ENCODE measurements at regions of chr14 and their contacts with region 1.

Region 1: DNA sequence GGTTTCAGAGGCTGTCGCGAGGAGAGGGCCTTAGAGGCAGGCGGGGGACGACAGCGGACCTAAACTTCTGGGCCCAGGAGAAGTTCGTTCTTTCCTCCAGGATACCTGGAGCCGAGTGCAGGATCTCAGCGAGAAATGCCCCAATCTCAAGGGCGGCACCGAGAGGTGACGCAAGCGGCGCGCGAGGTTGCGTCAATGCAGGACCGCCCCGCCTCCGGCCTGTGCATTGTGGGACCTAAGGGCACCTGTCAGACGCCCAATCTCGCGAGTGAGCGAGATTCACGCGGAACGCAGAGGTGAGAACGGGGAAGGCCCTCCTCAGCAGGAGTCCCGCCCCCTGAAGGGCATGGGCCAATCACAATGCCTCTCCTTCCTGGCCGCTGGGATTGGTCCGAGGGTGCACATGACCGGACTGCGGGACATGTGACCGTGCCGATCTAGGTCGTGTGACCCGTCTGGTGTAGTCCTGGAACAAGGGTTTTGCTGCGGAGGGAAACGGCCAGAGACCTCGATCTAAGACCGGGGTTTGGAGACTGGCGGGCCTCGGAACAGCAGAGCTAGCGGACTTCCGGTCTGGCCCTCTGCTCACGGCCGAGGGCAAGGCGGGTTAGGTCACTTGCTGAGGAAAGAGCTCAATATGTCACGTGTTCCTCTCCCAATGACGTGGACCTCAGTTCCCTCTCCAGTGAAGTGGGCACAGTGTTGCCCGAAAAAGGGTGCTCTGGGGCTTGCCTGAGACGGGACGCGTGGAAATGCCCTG is 16.3 kb upstream of the DYNC1H1 start:
- DNase-seq: peak; percentile 100
- ATAC-seq: peak; percentile 96
- H3K4me3 ChIP-seq: peak overlapping the region; percentile 80 to 99 (median 91)
- H3K4me3 Mint-ChIP-seq: peak overlapping the region; percentile 97
- H3K27ac ChIP-seq: peak overlapping the region; percentile 97 to 99
- H3K27ac Mint-ChIP-seq: peak overlapping the region; percentile 99
- H3K4me1 ChIP-seq: peaks cover 10 to 18% of the 10 kb centered on the region in 2 donors
- H3K4me1 Mint-ChIP-seq: peaks cover 23% of the 10 kb centered on the region
- H3K27me3 ChIP-seq: peaks cover 0 to 13% (median 2%) of the 10 kb centered on the region in 4 experiments
- H3K27me3 Mint-ChIP-seq: peaks cover 25% of the 10 kb centered on the region
- CTCF ChIP-seq: no peak

Region 2: GRCh38 chr14:101761032-101761880 is 186.8 kb before region 1 on chr14 and contains the start of gene PPP2R5C:
- CTCF ChIA-PET with region 1: interaction called, 4 read pairs
- POLR2A ChIA-PET with region 1: interaction called, 21 read pairs
- intact Hi-C with region 1: loop called (anchors 1 kb)
- DNase-seq: peak; percentile 93
- ATAC-seq: peak; percentile 63
- H3K4me3 ChIP-seq: peak within 1 kb of the TSS; percentile 73 to 96 (median 87)
- H3K4me3 Mint-ChIP-seq: peak within 1 kb of the TSS; percentile 94
- H3K27ac ChIP-seq: peak within 1 kb of the TSS; percentile 66 to 78
- H3K27ac Mint-ChIP-seq: peak within 1 kb of the TSS; percentile 92
- H3K4me1 ChIP-seq: peaks cover 11 to 12% of the 10 kb centered on the region in 2 donors
- H3K4me1 Mint-ChIP-seq: peaks cover 14% of the 10 kb centered on the region
- H3K27me3 ChIP-seq: no peaks in the 10 kb centered on the region
- H3K27me3 Mint-ChIP-seq: no peaks in the 10 kb centered on the region
- CTCF ChIP-seq: no peak
- total RNA-seq, gene PPP2R5C: 330 and 337 TPM in 2 replicates

Region 3: DNA sequence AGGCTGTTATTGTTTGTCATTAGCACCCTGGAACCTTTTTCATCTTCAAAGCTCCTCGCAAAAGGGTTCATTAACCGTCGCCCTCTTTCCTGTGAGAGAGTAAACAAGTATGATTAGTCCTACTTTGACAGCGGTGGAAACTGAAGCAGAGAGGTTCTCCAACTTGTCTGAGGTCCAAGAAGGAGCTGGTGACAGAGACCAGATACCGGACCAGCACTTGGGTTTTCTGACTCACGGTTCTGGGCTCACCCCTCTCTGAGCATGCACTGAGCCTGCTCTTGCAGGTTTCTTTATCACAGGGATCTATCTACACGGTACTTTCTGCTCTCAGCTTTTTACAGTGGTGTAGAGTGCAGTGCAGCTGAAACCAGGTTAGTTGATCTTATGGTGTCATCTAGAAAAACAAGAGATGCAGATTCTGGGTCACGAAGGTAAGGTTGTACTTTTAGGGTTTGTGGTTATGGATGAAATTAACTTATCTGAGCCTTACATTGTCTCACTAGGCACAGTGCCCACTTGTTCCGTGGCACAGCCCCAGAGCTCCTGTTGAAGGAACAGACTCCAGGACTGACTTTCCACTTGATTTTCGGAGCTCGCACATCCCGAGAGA is 124.5 kb before region 1 on chr14:
- CTCF ChIA-PET with region 1: no interaction called
- POLR2A ChIA-PET with region 1: interaction called, 5 read pairs
- intact Hi-C with region 1: loop called (anchors 1 kb)
- DNase-seq: peak; percentile 55
- ATAC-seq: peak; percentile 28
- H3K4me3 ChIP-seq: peak overlapping the region in 4 of 5 experiments; percentile 20 to 58 (median 48)
- H3K4me3 Mint-ChIP-seq: peak overlapping the region; percentile 92
- H3K27ac ChIP-seq: peak overlapping the region; percentile 99 to 100
- H3K27ac Mint-ChIP-seq: peak overlapping the region; percentile 99
- H3K4me1 ChIP-seq: peaks cover 80 to 82% of the 10 kb centered on the region in 2 donors
- H3K4me1 Mint-ChIP-seq: peaks cover 88% of the 10 kb centered on the region
- H3K27me3 ChIP-seq: no peaks in the 10 kb centered on the region
- H3K27me3 Mint-ChIP-seq: no peaks in the 10 kb centered on the region
- CTCF ChIP-seq: no peak

Region 4: GRCh38 chr14:101869217-101869616 is 78.9 kb before region 1 on chr14:
- CTCF ChIA-PET with region 1: no interaction called
- POLR2A ChIA-PET with region 1: interaction called, 10 read pairs
- intact Hi-C with region 1: no loop called
- DNase-seq: no peak
- ATAC-seq: no peak
- H3K4me3 ChIP-seq: no peak overlapping the region
- H3K4me3 Mint-ChIP-seq: no peak overlapping the region
- H3K27ac ChIP-seq: no peak overlapping the region
- H3K27ac Mint-ChIP-seq: no peak overlapping the region
- H3K4me1 ChIP-seq: peaks cover 8 to 9% of the 10 kb centered on the region in 2 donors
- H3K4me1 Mint-ChIP-seq: peaks cover 37% of the 10 kb centered on the region
- H3K27me3 ChIP-seq: no peaks in the 10 kb centered on the region
- H3K27me3 Mint-ChIP-seq: no peaks in the 10 kb centered on the region
- CTCF ChIP-seq: no peak

Region 5: DNA sequence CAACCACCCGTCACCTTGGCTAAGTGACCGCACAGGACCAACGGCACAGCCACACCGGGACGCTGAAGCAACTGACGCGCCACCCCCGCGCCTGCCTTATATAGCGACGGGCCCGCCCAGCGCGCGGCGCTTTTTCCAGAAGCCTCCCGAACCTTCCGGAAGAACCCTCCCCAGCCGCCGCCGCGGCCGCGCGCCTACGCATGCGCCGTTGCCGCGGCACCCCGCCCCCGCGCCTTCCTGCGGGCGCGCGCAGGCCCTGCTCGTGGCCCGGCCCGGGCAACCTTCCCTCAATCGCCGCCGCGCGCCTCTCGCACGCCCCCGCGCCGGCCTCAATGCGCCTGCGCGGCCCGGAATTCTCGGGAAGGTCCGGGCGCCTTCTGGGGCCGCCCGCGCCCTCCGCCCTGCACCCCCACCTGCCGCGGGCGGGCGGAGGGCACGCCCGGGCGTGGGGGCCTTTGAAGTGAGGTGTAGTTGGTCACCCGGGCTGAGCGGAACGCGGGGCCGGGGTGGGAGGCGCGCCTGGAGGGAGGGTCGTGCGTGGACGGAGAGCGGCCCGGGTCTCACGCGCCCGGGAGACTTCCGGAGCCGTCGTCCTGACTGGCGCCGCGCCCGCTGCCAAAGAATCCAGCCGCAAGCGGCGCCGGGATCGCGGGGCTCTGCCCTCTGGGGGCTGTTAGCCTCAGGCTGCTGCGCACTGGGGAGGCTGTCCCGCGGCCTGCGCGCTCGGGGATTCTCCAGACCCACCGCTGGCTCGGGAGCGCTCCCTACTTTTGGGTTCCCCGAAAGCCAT is 139.1 kb after region 1 on chr14 and contains the start of gene HSP90AA1:
- CTCF ChIA-PET with region 1: no interaction called
- POLR2A ChIA-PET with region 1: interaction called, 4 read pairs
- intact Hi-C with region 1: loop called (anchors 1 kb)
- DNase-seq: peak; percentile 97
- ATAC-seq: peak; percentile 70
- H3K4me3 ChIP-seq: peak within 1 kb of the TSS; percentile 79 to 91 (median 84)
- H3K4me3 Mint-ChIP-seq: peak within 1 kb of the TSS; percentile 95
- H3K27ac ChIP-seq: peak within 1 kb of the TSS; percentile 96 to 98
- H3K27ac Mint-ChIP-seq: peak within 1 kb of the TSS; percentile 96
- H3K4me1 ChIP-seq: peaks cover 18 to 28% of the 10 kb centered on the region in 2 donors
- H3K4me1 Mint-ChIP-seq: peaks cover 55% of the 10 kb centered on the region
- H3K27me3 ChIP-seq: no peaks in the 10 kb centered on the region
- H3K27me3 Mint-ChIP-seq: no peaks in the 10 kb centered on the region
- CTCF ChIP-seq: no peak
- total RNA-seq, gene HSP90AA1: 222 and 225 TPM in 2 replicates

Region 6: DNA sequence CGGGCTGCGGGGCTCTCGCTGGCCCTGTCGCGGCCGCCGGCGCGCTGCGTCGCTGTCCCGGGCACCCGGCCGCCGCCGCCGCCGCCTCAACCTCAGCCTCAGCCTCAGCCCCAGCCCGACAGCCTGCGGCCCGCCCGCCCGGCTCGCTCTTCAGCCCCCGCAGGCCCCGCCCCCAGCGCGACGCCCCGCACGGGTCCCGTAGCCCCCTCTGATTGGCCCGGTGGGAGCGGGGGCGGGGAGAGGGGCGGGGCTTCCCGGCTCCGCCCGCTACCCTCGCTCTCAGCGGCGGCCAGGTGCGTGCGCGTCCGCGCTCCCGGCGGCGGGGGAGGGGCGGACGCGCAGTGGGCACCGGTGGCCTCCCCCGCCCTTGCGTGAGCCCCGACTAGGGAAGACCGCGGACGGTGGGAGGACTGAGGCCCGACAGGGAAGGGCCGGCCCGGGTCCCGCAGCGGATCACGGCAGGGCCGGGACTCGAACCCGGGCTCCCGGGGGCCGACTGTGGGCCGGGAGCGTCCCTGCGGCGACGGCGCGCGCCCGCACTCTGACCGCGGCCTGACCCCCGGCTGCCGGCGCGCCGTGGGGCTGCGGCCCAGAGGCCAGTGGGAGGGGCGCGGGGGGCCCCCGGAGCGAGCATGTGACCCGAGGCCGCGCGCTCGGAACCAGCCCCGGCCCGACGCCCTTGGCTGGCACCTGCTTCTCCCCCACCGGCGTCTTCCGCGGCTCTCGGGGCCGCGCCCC is 1899.5 kb after region 1 on chr14 and contains the start of gene PPP1R13B:
- CTCF ChIA-PET with region 1: no interaction called
- POLR2A ChIA-PET with region 1: no interaction called
- intact Hi-C with region 1: loop called (anchors 10 kb)
- DNase-seq: peak; percentile 95
- ATAC-seq: peak; percentile 97
- H3K4me3 ChIP-seq: peak within 1 kb of the TSS; percentile 44 to 73 (median 60)
- H3K4me3 Mint-ChIP-seq: peak within 1 kb of the TSS; percentile 91
- H3K27ac ChIP-seq: peak within 1 kb of the TSS in 1 of 2 donors; percentile 59
- H3K27ac Mint-ChIP-seq: peak within 1 kb of the TSS; percentile 83
- H3K4me1 ChIP-seq: peaks cover 10 to 14% of the 10 kb centered on the region in 2 donors
- H3K4me1 Mint-ChIP-seq: peaks cover 16% of the 10 kb centered on the region
- H3K27me3 ChIP-seq: no peaks in the 10 kb centered on the region
- H3K27me3 Mint-ChIP-seq: no peaks in the 10 kb centered on the region
- CTCF ChIP-seq: no peak
- total RNA-seq, gene PPP1R13B: 27.7 and 38.6 TPM in 2 replicates